BJ (cell line): ENCODE measurements at regions of chr2 and their contacts with region 1.

Region 1: DNA sequence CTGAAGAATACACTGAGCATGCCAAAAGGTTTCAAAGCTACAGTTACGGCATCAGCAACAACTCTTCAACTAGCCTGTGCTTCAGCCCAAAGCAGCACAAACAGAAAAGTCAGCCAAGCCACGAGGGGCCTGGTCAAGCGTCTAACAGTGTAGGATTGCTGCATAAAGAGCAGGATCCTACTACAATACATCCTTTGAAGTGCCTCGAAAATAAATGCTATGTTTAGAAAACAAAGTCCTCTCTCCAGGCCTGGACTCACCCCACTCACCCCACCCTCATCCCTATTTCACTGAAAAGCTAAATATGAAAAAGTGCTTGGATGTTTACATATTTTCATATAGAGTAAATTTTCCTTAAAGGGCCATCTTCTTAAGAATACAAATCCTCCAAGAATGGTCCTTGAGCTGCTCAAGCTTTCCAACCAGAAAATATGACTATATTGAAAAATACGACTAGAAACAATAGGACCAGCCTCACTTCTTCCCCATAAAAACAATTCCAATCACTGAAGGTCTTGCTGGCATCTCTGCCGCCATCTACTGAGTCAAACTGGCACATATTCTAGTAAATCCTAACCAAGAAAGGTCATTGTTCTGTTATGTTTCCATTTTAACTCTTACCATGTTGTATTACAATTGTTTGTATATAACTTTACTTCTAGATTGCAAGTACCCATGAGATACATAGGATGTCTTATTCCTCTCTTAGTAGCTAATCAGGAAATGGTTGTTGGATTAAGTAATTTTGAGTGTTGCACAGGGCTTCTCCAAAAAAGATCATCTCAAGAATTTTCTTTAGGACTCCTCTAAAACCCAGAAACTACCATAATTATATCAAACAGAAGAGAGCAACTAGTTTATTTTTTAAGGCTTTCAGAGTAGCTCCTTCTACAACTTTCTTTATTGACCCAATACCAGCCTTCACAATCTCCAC is 63.6 kb downstream of the CLHC1 start:
- DNase-seq: peak; percentile 36
- H3K4me3 ChIP-seq: no peak overlapping the region
- H3K27me3 ChIP-seq: no peaks in the 10 kb centered on the region
- CTCF ChIP-seq: peak; percentile 73

Region 2: GRCh38 chr2:54899576-54900200 is 268.8 kb before region 1 on chr2:
- CTCF ChIA-PET with region 1: interaction called, 184 read pairs
- POLR2A ChIA-PET with region 1: interaction called, 5 read pairs
- DNase-seq: no peak
- H3K4me3 ChIP-seq: no peak overlapping the region
- H3K27me3 ChIP-seq: no peaks in the 10 kb centered on the region
- CTCF ChIP-seq: peak; percentile 70

Region 3: GRCh38 chr2:55014962-55015939 is 153.2 kb before region 1 on chr2:
- CTCF ChIA-PET with region 1: interaction called, 16 read pairs
- POLR2A ChIA-PET with region 1: no interaction called
- DNase-seq: peak; percentile 21
- H3K4me3 ChIP-seq: no peak overlapping the region
- H3K27me3 ChIP-seq: no peaks in the 10 kb centered on the region
- CTCF ChIP-seq: peak; percentile 57

Region 4: DNA sequence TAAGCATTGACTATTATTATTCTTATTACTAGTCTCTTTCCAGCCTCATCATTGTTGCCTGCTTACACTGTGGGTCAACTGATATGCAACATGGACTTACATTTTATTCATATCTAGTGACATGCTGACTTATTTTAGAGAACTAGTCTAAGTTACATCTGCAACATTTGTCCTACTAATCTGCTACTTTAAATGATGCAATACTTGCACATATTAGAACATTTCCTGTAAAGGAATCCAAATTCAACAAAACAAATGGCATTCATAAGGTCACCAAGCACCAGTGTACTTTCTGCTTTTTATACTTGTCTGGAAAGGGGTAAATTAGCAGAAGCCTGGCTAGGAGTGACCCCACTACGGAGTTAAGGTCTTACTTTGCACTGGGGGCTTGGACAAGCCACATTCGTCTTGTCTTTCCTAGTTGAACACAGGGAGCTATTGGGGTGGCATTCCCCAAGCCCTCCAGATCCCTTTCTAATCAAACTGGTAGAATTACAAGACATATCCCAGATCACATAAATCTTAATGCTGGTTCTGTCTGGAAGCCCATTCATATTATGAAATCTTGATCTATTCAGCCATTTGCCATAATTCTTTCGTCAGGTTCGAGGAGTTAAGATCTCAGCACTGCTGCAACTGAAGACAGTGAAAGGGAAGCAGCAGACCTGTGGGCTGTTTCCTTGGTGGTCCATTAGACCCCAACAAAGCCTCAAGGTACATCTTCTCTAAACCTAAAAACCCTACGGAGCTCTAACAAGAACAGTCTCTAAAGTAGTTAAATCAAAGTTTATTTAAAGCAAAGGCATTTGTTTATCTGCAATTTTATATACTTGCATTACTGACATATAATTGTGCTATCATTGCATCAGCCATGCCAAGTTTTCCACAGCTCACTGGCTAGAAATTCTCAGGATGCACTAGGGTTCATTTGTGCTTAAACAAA is 68.3 kb before region 1 on chr2:
- CTCF ChIA-PET with region 1: interaction called, 12 read pairs
- POLR2A ChIA-PET with region 1: no interaction called
- DNase-seq: no peak
- H3K4me3 ChIP-seq: no peak overlapping the region
- H3K27me3 ChIP-seq: no peaks in the 10 kb centered on the region
- CTCF ChIP-seq: no peak

Region 5: DNA sequence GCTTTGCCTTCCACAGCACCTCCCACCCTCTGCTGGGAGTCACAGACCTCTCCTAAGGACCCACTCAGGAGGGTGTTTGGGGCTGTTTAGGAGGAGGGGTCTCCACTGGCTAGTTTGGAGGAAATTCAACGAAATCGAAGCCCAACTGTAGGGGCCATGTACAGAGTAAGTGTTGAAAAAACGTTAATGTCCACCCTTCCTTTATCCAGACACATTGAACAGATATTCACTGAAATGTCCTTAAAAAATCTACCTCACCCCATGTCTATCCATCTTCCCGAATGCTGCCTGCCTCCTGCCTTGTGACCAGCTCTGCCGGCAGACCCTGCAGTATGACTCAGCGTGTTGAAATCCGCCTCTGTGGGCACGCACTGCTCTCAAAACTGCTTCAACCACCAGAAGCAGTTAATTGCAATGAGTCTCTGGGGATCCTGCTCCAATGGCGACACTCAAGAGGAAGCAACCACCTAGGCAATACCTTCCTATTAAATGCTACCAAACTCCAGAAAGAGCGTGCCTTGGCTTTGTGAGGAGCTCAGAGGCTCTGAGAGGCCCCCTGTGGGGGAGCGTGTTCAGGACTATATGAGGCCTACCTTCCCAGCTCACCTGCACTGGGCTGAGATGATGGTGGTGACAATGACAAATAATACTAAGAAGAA is 56.8 kb before region 1 on chr2:
- CTCF ChIA-PET with region 1: interaction called, 14 read pairs
- POLR2A ChIA-PET with region 1: no interaction called
- DNase-seq: peak; percentile 80
- H3K4me3 ChIP-seq: no peak overlapping the region
- H3K27me3 ChIP-seq: no peaks in the 10 kb centered on the region
- CTCF ChIP-seq: no peak

Region 6: DNA sequence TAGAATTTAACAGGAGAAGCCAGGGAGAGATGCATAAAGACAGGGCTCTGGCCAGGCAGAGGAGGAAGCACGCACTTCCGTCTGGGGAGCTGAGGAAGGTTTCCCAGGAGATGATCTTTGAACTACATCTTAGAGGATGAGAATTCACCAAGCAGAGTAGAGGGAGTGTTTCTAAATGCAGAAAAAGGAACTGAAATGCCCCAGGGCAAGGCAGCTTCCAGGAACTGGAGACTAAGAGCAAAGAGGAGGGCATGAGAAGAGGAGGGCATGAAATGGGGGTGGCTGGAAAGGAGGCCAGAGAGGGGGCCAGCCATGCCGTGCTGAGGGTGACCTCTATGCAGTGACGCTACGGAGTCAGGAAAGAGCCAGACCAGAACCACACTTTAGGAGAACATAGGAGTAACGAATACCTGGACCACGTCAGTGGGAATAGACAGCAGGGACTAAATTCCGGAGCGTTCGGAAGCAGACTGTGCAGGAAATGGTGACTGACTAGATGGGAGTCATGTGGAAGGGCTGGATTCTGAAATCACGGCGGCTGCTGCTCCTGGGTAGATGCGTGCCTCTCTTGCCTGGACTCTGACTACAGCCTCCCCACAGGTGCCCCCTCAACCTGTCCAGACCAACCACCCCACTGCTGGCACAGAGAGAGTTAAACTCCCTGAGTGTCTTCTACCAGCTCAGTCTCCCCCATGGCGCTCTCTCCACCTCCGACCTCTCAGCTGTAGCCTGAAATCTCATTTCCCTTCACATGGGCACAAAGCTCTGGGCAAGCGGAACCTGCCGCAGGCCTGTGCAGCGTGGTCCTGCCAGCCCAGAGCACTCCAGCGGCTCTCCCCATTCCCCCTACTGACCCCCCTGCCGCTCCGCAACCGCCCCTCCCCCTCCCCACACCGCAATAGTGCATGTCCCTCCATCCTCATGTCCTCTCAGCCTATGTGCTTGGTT is 31.2 kb before region 1 on chr2:
- CTCF ChIA-PET with region 1: no interaction called
- POLR2A ChIA-PET with region 1: no interaction called
- DNase-seq: no peak
- H3K4me3 ChIP-seq: no peak overlapping the region
- H3K27me3 ChIP-seq: no peaks in the 10 kb centered on the region
- CTCF ChIP-seq: no peak

Region 7: GRCh38 chr2:55232084-55232862 is 63.8 kb after region 1 on chr2 and contains the starts of genes CLHC1 and RPS27A:
- CTCF ChIA-PET with region 1: no interaction called
- POLR2A ChIA-PET with region 1: no interaction called
- DNase-seq: peak; percentile 81
- H3K4me3 ChIP-seq: peak within 1 kb of the TSS; percentile 83
- H3K27me3 ChIP-seq: no peaks in the 10 kb centered on the region
- CTCF ChIP-seq: no peak
- polyA plus RNA-seq, gene CLHC1: 3.8 and 8.4 TPM in 2 replicates
- polyA plus RNA-seq, gene RPS27A: 769 and 1,763 TPM in 2 replicates